GM12878 (cell line): ENCODE measurements at regions of chr1 and their contacts with region 1.

Region 1: DNA sequence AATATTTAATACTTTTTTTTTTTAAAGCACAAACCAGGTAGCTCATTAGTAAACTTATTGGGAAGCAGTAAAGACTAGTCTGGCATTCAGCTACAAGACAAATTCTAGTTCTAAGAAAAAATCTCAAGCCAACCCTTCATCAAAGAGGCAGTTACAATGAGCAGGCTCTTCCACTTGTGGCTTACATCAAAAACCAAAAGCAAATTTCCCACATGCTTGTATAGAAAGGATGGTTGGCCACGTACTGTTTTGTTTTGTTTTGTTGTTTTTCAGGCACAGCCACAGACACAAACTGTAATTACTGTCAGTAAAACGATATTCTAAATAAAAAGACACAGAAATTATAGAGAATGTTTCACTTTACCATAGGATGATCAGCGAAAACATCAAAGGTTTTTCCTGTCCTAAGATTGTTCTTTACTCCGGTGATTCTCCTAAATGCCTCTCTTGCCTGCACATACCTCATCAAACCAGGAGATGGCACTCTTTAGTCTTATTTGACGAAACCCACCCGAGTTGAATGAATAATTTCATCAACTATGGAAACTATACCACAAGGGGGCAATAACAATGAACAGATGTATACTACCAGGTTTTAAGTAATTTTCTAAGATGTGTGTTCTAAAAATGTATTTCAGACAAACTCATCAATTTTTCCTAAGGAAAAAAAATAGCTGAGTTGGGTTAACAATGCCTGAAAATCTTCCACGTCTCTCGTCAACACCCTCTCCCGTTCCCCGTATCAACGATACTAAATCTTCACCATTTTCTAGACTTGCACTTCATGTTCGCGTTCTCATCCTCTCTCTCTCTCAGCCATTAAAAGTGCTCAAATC is 26.9 kb downstream of the RPL5 start:
- DNase-seq: peak; percentile 59
- ATAC-seq: peak; percentile 90
- H3K4me3 ChIP-seq: no peak overlapping the region
- H3K27ac ChIP-seq: no peak overlapping the region
- H3K4me1 ChIP-seq: peaks cover 9% of the 10 kb centered on the region
- H3K27me3 ChIP-seq: no peaks in the 10 kb centered on the region
- CTCF ChIP-seq: peak; percentile 78 to 99 (median 96)
- EP300 ChIP-seq: no peak
- POLR2A ChIP-seq: no peak
- RAD21 ChIP-seq: peak; percentile 100

Region 2: DNA sequence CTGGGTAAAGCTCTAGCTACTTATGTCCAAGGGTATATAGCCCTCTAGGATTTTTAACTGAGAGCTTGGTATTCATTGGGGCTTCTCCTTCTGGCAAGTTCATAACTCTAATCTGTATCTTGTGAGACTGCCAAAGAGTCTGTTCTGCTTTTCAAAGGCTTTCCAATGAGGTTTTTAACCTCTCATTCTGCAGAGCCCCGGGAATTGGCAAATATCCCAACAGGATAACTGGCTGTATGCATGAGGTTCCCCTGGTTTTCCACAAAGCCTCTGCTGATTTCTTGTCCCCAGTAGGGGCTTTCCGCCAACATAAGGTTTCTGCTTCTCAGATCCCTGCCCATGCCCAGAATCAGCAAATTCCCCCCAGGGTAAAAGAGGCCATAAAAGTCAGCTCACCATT is 13.9 kb after region 1 on chr1:
- CTCF ChIA-PET with region 1: interaction called, 23 read pairs
- POLR2A ChIA-PET with region 1: no interaction called
- RAD21 ChIA-PET with region 1: interaction called, 3 read pairs
- SMC1A ChIA-PET with region 1: interaction called, 7 read pairs
- in situ Hi-C with region 1: no loop called
- intact Hi-C with region 1: no loop called
- DNase-seq: no peak
- ATAC-seq: no peak
- H3K4me3 ChIP-seq: no peak overlapping the region
- H3K27ac ChIP-seq: no peak overlapping the region
- H3K4me1 ChIP-seq: no peaks in the 10 kb centered on the region; the same call in 1 of the 2 replicates
- H3K27me3 ChIP-seq: no peaks in the 10 kb centered on the region
- CTCF ChIP-seq: no peak
- EP300 ChIP-seq: no peak
- POLR2A ChIP-seq: no peak
- RAD21 ChIP-seq: no peak

Region 3: DNA sequence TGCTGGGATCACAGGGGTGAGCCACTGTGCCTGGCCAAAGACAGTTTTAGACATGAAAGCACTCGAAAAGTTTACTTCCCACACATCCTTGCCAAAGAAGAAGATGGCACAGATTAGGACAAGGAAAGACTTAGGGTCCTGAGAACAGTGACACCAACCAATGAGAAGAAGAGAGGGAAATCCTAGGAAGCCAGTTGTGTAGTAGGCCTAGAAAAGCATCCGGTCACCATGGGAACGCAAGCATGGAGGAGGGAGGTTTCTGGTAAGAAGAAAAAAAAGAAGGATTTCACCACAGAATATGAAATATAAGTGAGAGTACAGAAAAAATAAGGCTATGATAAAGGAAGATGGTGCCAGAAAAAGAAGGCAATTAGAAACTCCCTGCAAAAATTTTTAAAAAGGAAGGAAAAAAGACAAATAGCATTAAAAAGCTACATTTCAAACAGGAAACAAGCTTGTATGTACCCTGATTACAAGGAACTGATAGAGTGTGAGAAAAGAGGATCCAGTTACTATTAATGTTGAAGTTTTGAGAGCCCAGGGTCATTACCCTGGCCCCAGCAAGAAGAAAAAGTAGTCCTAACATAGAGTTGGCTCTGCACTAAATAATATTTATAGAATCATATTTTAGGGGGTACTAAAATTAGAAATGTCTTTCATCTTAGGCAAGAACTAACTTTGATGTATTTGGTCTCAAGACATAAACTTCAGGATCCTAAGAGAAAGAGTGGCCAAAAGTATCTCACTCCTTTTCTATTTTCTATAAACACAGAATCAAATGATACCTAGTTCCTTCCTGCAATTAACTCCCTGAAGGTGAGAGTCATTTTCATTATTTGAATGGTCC is 86.3 kb after region 1 on chr1:
- CTCF ChIA-PET with region 1: interaction called, 31 read pairs
- POLR2A ChIA-PET with region 1: interaction called, 3 read pairs
- RAD21 ChIA-PET with region 1: interaction called, 16 read pairs
- SMC1A ChIA-PET with region 1: interaction called, 18 read pairs
- in situ Hi-C with region 1: no loop called
- intact Hi-C with region 1: no loop called
- DNase-seq: no peak
- ATAC-seq: peak; percentile 73
- H3K4me3 ChIP-seq: peak overlapping the region; percentile 22; the same call in 1 of the 2 replicates
- H3K27ac ChIP-seq: peak overlapping the region; percentile 3
- H3K4me1 ChIP-seq: peaks cover 29% of the 10 kb centered on the region
- H3K27me3 ChIP-seq: no peaks in the 10 kb centered on the region
- CTCF ChIP-seq: no peak
- EP300 ChIP-seq: no peak
- POLR2A ChIP-seq: no peak
- RAD21 ChIP-seq: no peak

Region 4: DNA sequence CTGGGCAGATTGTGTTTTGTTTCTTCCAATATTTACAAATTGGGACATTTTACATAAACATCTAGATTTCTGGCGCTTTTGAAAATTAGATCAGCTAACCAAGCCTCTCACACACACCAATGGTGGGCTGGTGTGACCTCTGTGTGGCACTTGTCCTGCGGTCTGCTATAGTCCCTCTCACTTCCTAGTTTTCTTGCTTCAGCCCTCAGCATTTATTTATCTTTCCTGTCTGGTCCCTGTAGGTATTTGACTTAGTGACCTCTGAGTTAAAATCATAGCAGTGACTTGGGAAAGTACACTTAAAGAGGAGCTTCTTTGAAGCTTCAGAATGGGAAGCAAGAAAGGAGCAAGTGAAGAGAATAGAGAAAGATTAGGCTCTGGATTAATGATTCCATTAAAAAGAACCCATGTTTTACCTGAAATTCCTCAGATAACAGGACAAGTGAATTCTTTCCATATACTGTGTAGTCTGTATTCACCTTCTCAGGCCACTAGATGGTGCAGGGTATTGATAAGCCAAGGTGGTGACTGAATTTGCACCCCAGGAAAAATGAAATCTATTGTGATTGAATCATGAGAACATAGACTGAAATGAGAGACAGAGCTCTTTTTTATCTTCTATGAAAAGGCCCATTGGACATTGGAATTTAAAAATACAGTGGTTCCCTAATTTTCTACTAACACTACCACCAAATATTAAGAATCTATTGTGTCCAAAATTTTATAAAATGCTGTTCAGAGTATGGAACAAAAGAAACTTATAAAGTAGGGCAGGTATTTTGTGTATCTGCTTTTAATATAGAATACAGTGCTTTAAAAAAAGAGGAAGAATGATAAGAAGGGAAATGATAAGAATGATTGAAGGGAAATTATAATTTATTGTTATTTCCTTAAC is 109.6 kb after region 1 on chr1:
- CTCF ChIA-PET with region 1: interaction called, 169 read pairs
- POLR2A ChIA-PET with region 1: no interaction called
- RAD21 ChIA-PET with region 1: interaction called, 106 read pairs
- SMC1A ChIA-PET with region 1: interaction called, 179 read pairs
- in situ Hi-C with region 1: no loop called
- intact Hi-C with region 1: loop called (anchors 2 kb)
- DNase-seq: no peak
- ATAC-seq: peak; percentile 84
- H3K4me3 ChIP-seq: no peak overlapping the region
- H3K27ac ChIP-seq: no peak overlapping the region
- H3K4me1 ChIP-seq: peaks cover 30% of the 10 kb centered on the region
- H3K27me3 ChIP-seq: no peaks in the 10 kb centered on the region
- CTCF ChIP-seq: peak; percentile 72 to 81 (median 74)
- EP300 ChIP-seq: no peak
- POLR2A ChIP-seq: no peak
- RAD21 ChIP-seq: peak; percentile 89

Region 5: GRCh38 chr1:93000751-93001175 is 142.0 kb after region 1 on chr1:
- CTCF ChIA-PET with region 1: interaction called, 20 read pairs
- POLR2A ChIA-PET with region 1: no interaction called
- RAD21 ChIA-PET with region 1: interaction called, 8 read pairs
- SMC1A ChIA-PET with region 1: interaction called, 9 read pairs
- in situ Hi-C with region 1: no loop called
- intact Hi-C with region 1: no loop called
- DNase-seq: no peak
- ATAC-seq: peak; percentile 71
- H3K4me3 ChIP-seq: no peak overlapping the region
- H3K27ac ChIP-seq: no peak overlapping the region
- H3K4me1 ChIP-seq: peaks cover 6% of the 10 kb centered on the region
- H3K27me3 ChIP-seq: no peaks in the 10 kb centered on the region
- CTCF ChIP-seq: no peak
- EP300 ChIP-seq: no peak
- POLR2A ChIP-seq: no peak
- RAD21 ChIP-seq: no peak

Region 6: DNA sequence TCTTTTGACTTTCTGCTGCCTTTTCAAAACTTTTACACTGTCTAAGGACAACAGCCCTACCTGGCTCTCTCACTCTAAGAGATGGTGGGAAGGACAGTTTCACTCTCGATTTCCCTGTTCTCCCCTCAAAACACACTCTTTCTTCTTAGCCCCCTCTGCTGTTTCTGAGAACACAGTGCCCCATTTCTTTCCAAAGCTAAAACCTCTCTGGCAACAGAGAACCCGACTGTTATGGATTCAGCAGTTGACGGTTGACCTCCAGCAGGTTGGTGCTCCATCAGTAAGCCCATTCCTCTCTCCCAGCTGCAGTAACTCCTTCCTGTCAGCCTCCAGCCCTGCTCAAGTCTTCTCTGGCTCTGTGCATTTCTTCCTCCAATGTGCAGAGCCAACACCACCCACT is 1471.2 kb after region 1 on chr1:
- CTCF ChIA-PET with region 1: no interaction called
- POLR2A ChIA-PET with region 1: no interaction called
- RAD21 ChIA-PET with region 1: no interaction called
- SMC1A ChIA-PET with region 1: no interaction called
- in situ Hi-C with region 1: no loop called
- intact Hi-C with region 1: no loop called
- DNase-seq: no peak
- ATAC-seq: no peak
- H3K4me3 ChIP-seq: no peak overlapping the region
- H3K27ac ChIP-seq: no peak overlapping the region
- H3K4me1 ChIP-seq: peaks cover 19% of the 10 kb centered on the region
- H3K27me3 ChIP-seq: no peaks in the 10 kb centered on the region
- CTCF ChIP-seq: 0 out of 6 replicates have a peak, but pooled peaks of 2 of the 3 experiments have one; percentile 1 to 3
- EP300 ChIP-seq: no peak
- POLR2A ChIP-seq: no peak
- RAD21 ChIP-seq: peak; percentile 24; the same call in 1 of the 2 replicates